HepG2 (cell line): ENCODE measurements at regions of chr19 and their contacts with region 1.

Region 1: DNA sequence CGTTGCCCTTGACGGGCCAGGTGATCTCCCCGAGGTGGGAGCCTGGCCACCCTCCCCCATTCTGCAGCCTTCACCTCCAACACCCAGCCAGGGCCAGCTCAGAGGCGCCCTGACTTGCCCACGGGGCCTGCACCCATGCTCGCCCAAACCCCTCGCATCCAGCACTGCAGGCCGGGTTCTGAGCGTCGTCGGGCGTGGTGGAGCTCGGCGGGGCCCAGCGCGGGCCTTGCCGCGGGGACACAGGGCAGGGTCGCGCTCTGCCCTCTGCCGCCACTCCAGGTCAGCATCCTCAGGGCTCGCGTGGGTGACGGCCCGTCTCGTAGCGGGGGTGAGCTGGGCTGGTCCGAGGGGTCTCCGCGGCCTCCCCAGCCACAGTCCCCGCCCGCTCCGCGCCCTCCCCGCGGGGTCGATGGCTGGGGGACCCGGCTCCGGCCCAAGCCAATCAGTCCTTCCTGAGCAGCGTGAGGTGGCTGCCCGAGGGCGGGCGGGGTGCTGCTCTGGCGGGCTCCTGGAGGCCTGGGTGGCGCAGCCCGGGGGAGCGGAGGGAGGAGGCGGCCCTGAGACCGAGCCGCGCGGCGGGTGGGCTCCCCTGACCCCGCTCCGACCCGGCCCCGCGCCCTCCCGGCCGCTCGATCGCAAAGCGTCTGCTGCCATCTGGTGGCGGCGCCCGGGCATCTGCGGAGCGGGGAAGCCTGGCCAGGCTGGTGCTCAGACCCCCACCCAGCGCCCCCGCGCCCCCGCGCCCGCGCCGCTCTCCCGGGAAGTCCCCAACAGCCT is 61.4 kb downstream of the CCNE1 start:
- DNase-seq: no peak
- ATAC-seq: peak; percentile 95
- H3K4me3 ChIP-seq: peak overlapping the region; percentile 14 to 71 (median 45); a peak in 4 of 6 replicates
- H3K27ac ChIP-seq: no peak overlapping the region
- H3K4me1 ChIP-seq: peaks cover 22% of the 10 kb centered on the region
- H3K27me3 ChIP-seq: peaks cover 3 to 12% of the 10 kb centered on the region in 2 experiments; a peak in 3 of 5 replicates
- CTCF ChIP-seq: peak; percentile 80
- EP300 ChIP-seq: no peak
- POLR2A ChIP-seq: no peak
- RAD21 ChIP-seq: peak; percentile 97

Region 2: GRCh38 chr19:29761575-29762232 is 111.5 kb before region 1 on chr19:
- CTCF ChIA-PET with region 1: interaction called, 23 read pairs
- POLR2A ChIA-PET with region 1: no interaction called
- in situ Hi-C with region 1: loop called (anchors 5 kb)
- intact Hi-C with region 1: no loop called
- DNase-seq: no peak
- ATAC-seq: no peak
- H3K4me3 ChIP-seq: no peak overlapping the region
- H3K27ac ChIP-seq: no peak overlapping the region
- H3K4me1 ChIP-seq: no peaks in the 10 kb centered on the region
- H3K27me3 ChIP-seq: peaks cover 0 to 19% of the 10 kb centered on the region in 2 experiments; a peak in 3 of 5 replicates
- CTCF ChIP-seq: no peak
- EP300 ChIP-seq: no peak
- POLR2A ChIP-seq: no peak
- RAD21 ChIP-seq: no peak

Region 3: GRCh38 chr19:29771708-29772414 is 101.4 kb before region 1 on chr19:
- CTCF ChIA-PET with region 1: interaction called, 44 read pairs
- POLR2A ChIA-PET with region 1: no interaction called
- in situ Hi-C with region 1: no loop called
- intact Hi-C with region 1: loop called (anchors 2 kb)
- DNase-seq: peak; percentile 41
- ATAC-seq: peak; percentile 94
- H3K4me3 ChIP-seq: no peak overlapping the region
- H3K27ac ChIP-seq: no peak overlapping the region
- H3K4me1 ChIP-seq: no peaks in the 10 kb centered on the region
- H3K27me3 ChIP-seq: peaks cover 2 to 14% of the 10 kb centered on the region in 2 experiments; a peak in 4 of 5 replicates
- CTCF ChIP-seq: peak; percentile 83
- EP300 ChIP-seq: no peak
- POLR2A ChIP-seq: no peak
- RAD21 ChIP-seq: peak; percentile 60

Region 4: GRCh38 chr19:29917911-29918310 is 44.7 kb after region 1 on chr19:
- CTCF ChIA-PET with region 1: no interaction called
- POLR2A ChIA-PET with region 1: no interaction called
- in situ Hi-C with region 1: no loop called
- intact Hi-C with region 1: no loop called
- DNase-seq: no peak
- ATAC-seq: no peak
- H3K4me3 ChIP-seq: no peak overlapping the region
- H3K27ac ChIP-seq: no peak overlapping the region
- H3K4me1 ChIP-seq: peaks cover 10% of the 10 kb centered on the region; the same call in 1 of the 2 replicates
- H3K27me3 ChIP-seq: no peaks in the 10 kb centered on the region
- CTCF ChIP-seq: no peak
- EP300 ChIP-seq: no peak
- POLR2A ChIP-seq: no peak
- RAD21 ChIP-seq: no peak